ENCODE measurements at regions of chr15 and their contacts with region 1.

Region 1: DNA sequence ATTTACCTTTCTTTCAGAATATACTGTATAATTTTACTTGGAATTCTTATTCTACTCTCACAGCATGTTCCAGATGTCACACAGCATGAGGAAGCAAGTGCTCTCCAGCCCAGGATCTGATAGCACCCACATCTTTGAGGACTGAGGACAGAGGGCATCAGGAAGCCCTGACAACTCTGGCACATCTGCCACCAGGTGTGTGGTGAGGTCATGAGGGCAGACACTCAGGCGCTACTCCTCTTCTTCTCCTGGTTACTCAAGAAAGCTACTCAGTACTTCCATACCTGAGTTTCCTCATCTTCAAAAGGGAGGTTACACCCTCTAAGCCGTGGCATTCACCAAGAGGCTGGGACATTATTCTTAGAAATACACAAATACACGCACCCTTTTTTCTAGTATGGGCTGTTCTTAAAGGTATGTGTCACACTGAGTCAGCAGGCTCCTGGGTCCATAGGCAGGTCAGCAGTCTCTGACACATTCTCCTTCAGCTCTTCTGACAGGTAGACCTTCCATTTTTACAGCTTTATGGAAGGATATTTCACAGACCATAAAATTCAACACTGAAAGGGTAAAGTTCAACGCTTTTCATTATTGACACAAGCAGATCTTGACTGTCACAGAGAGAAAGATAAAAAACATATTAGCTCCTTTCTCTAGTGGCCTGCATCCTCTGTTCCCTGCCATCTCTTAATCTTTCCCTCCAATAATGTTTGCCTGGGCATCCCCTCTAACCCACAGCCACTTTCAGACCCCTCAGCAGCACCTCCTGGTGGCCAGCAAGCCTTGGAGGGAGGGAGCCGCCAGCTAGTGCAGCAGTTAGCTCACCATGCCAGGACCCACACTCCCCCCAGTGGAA is 103.2 kb upstream of the TJP1 start:
- DNase-seq: peak; percentile 66 to 98
- H3K4me3 ChIP-seq: peak overlapping the region; percentile 28; the same call in 1 of the 2 replicates
- H3K27ac ChIP-seq: peak overlapping the region; percentile 97
- H3K4me1 ChIP-seq: peaks cover 66% of the 10 kb centered on the region
- H3K27me3 ChIP-seq: no peaks in the 10 kb centered on the region
- CTCF ChIP-seq: peak; percentile 73

Region 2: DNA sequence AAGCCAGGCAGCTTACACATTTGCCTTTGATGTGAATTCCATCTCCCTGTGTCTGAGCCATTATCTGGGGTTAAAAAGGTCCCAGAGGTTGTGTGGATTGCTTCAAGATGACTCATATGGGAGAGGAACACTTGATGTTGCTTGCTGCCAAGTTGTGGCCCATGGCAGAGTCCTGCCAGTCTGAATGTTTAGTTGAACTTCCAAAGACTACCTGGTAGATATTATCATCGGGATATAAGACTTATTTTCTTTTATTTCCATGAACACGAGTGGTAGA is 188.8 kb before region 1 on chr15:
- CTCF ChIA-PET with region 1: interaction called, 3 read pairs
- POLR2A ChIA-PET with region 1: interaction called, 7 read pairs
- intact Hi-C with region 1: loop called (anchors 1 kb)
- DNase-seq: peak; percentile 59 to 79
- H3K4me3 ChIP-seq: no peak overlapping the region
- H3K27ac ChIP-seq: peak overlapping the region; percentile 5
- H3K4me1 ChIP-seq: peaks cover 29% of the 10 kb centered on the region
- H3K27me3 ChIP-seq: no peaks in the 10 kb centered on the region
- CTCF ChIP-seq: no peak

Region 3: GRCh38 chr15:29812221-29812620 is 113.2 kb before region 1 on chr15:
- CTCF ChIA-PET with region 1: interaction called, 4 read pairs
- POLR2A ChIA-PET with region 1: interaction called, 3 read pairs
- intact Hi-C with region 1: loop called (anchors 2 kb)
- DNase-seq: peak; percentile 65 to 97
- H3K4me3 ChIP-seq: no peak overlapping the region; the same call in 1 of the 2 replicates
- H3K27ac ChIP-seq: peak overlapping the region; percentile 65
- H3K4me1 ChIP-seq: peaks cover 58% of the 10 kb centered on the region
- H3K27me3 ChIP-seq: no peaks in the 10 kb centered on the region
- CTCF ChIP-seq: no peak

Region 4: GRCh38 chr15:29844284-29844913 is 81.1 kb before region 1 on chr15:
- CTCF ChIA-PET with region 1: no interaction called
- POLR2A ChIA-PET with region 1: no interaction called
- intact Hi-C with region 1: loop called (anchors 1 kb)
- DNase-seq: peak; percentile 38 to 90
- H3K4me3 ChIP-seq: no peak overlapping the region
- H3K27ac ChIP-seq: peak overlapping the region; percentile 69
- H3K4me1 ChIP-seq: peaks cover 31% of the 10 kb centered on the region
- H3K27me3 ChIP-seq: no peaks in the 10 kb centered on the region
- CTCF ChIP-seq: no peak

Region 5: GRCh38 chr15:29873947-29874411 is 51.5 kb before region 1 on chr15:
- CTCF ChIA-PET with region 1: no interaction called
- POLR2A ChIA-PET with region 1: no interaction called
- intact Hi-C with region 1: no loop called
- DNase-seq: no peak
- H3K4me3 ChIP-seq: no peak overlapping the region
- H3K27ac ChIP-seq: no peak overlapping the region
- H3K4me1 ChIP-seq: no peaks in the 10 kb centered on the region
- H3K27me3 ChIP-seq: no peaks in the 10 kb centered on the region
- CTCF ChIP-seq: no peak

Region 6: DNA sequence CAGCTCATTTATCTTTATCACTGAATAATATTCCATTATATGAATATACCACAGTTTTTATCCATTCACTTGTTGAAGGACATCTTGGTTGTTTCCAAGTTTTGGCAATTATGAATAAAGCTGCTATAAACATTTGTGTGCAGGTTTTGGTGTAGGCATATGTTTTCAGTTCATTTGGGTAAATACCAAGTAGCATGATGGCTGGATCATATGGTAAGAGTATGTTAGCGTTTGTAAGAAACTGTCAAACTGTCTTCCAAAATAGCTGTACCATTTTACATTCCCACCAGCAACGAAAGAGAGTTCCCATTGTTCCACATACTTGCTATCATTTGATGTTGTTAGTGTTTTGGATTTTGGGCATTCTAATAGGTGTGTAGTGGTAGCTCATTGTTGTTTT is 85.3 kb after region 1 on chr15:
- CTCF ChIA-PET with region 1: no interaction called
- POLR2A ChIA-PET with region 1: no interaction called
- intact Hi-C with region 1: no loop called
- DNase-seq: no peak
- H3K4me3 ChIP-seq: no peak overlapping the region
- H3K27ac ChIP-seq: no peak overlapping the region
- H3K4me1 ChIP-seq: no peaks in the 10 kb centered on the region
- H3K27me3 ChIP-seq: no peaks in the 10 kb centered on the region
- CTCF ChIP-seq: no peak